Calu3 (cell line): ENCODE measurements at regions of chr20 and their contacts with region 1.

Region 1: GRCh38 chr20:5126512-5127203 is at the start of gene CDS2:
- DNase-seq: peak; percentile 96
- H3K4me3 Mint-ChIP-seq: peak within 1 kb of the TSS; percentile 85
- H3K27ac Mint-ChIP-seq: peak within 1 kb of the TSS; percentile 59
- H3K4me1 Mint-ChIP-seq: peaks cover 11% of the 10 kb centered on the region
- H3K27me3 Mint-ChIP-seq: no peaks in the 10 kb centered on the region
- CTCF ChIP-seq: peak; percentile 29
- total RNA-seq, gene CDS2: 21.5 and 25.7 TPM in 2 replicates

Region 2: DNA sequence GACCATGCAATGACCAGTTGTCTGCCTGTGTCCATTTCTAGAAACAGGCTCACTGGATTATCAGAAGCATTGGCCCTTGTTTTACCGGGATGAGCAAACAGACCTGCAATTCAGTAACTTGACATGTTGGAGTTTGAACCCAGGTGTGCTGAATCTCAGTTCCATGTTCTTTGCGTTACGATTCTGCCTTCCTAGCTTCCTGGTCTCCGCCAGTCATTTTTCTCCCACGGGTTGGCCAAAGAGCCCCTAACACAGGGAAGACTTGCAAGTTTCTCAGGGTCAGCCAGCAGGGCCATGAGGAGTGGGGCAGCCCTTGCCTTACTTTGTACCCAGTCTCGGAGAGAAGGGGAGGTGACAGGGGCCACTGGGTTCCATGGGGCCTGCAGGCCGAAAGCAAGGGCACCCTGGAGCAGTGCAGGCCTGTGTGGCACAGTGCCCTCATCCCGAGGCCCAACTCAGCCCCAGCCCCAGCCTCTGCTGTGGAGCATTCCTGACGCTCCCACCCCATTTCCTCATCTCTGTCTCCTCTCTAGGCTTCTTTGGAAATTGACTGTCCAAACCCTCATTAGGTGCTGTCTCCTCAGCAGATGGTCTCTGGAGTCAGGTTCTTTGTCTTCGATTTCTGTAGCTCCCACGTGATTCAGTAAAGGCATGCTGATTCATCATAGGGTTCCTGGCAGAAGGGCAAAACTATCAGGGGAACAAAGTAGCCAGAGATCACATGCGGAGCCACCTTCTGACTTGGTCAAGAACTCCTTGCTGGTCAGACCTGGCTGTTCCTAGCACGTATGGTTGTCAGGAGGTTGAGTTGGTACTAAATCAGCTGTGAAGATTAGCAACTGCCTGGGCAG is 23.8 kb after region 1 on chr20:
- CTCF ChIA-PET with region 1: no interaction called
- intact Hi-C with region 1: no loop called
- DNase-seq: no peak
- H3K4me3 Mint-ChIP-seq: no peak overlapping the region
- H3K27ac Mint-ChIP-seq: no peak overlapping the region
- H3K4me1 Mint-ChIP-seq: peaks cover 36% of the 10 kb centered on the region
- H3K27me3 Mint-ChIP-seq: no peaks in the 10 kb centered on the region
- CTCF ChIP-seq: no peak

Region 3: DNA sequence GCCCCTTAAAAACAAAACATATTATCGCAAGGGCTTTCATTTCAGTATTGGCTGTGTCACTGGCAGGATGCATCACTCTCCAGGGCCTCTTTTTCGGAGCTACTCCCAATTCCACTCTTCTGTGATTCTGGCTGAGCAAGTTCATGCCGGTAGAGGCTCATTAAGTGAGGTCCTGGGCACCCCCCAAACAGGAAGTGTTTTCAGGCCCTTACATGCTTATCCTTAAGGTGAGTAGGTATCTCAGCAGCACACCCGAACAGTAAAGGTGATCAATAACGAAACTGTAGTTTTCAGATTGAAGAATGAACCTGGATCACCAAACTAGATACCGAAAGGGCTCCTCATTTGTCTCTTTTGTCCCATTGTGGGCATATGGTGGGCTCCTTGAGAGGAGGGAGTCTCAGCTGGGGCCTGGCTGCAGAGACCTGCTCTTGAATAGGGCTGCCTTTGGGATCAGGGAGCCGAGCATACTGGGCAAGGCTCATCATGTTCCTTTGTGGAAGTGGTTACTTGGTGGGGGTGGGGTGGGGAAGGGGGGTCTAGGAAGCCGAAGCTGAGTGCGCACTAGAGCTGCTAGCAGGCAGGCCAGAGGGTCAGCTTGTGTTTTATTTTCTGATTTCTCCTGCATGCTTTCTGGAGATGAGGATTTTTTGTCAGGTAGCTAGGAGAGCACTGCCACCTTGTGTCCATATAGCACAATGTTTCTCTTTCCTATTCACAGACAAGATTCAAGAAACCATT is 65.3 kb after region 1 on chr20:
- CTCF ChIA-PET with region 1: interaction called, 47 read pairs
- intact Hi-C with region 1: loop called (anchors 2 kb)
- DNase-seq: peak; percentile 8
- H3K4me3 Mint-ChIP-seq: no peak overlapping the region
- H3K27ac Mint-ChIP-seq: no peak overlapping the region
- H3K4me1 Mint-ChIP-seq: no peaks in the 10 kb centered on the region
- H3K27me3 Mint-ChIP-seq: no peaks in the 10 kb centered on the region
- CTCF ChIP-seq: peak; percentile 30